Mucosa of descending colon (tissue), 3 donors: ENCODE measurements at regions of chr9 and their contacts with region 1.

Region 1: GRCh38 chr9:107172160-107172978 is 110.7 kb upstream of the RAD23B start:
- DNase-seq: peak in 2 of 3 donors; percentile 77 to 84
- ATAC-seq: peak; percentile 83
- H3K4me3 ChIP-seq: no peak overlapping the region
- H3K4me1 ChIP-seq: peaks cover 5% of the 10 kb centered on the region
- CTCF ChIP-seq: peak; percentile 64

Region 2: DNA sequence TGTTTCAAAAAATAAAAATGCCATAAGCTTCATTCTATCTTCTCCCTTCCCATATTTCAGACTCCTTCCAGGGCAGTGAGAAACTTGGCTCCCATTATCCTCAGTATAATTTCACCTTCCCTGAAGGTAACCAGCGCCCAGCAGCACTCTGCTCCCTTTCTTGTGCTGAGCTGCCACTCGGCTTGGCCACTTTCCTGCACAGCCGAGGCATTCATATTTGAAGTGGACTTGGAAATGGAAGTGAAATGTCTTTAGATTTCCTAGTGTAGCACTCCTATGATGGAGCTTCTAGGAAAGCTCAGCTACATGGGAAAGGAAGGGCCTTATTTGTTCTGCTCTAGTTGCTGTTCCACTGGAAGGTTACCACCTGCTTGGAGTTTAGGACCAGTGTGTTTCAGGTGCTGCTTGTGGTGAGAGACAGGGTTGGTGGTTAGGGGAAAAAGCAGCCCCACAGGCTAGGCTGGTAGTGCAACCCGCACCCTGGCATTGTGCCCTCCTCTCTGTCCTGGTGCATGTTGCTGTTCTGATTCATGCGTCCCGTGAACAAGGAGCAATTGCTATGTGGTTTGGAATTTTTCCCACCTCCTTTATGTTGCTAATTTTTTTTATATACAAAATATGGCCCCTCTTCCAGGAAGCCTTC is 164.5 kb after region 1 on chr9:
- intact Hi-C with region 1: loop called in 1 of 2 experiments (anchors 10 kb)
- DNase-seq: no peak
- ATAC-seq: no peak
- H3K4me3 ChIP-seq: no peak overlapping the region
- H3K4me1 ChIP-seq: no peaks in the 10 kb centered on the region
- CTCF ChIP-seq: no peak

Region 3: DNA sequence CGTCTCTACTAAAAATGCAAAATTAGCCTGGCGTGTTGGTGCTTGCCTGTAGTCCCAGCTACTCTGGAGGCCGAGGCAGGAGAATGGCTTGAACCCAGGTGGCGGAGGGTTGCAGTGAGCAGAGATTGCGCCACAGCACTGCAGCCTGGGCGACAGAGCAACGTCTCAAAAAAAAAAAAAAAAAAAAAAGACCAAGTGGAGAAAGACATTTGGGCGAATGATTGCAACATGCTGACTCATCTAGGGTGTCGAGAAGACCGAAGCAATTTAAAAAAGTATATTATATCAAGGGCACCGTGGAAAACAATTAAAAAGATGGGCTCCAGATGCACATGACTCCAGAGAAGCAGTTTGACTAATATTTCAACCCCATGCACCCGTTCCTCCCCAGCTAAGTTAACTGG is 308.0 kb after region 1 on chr9:
- intact Hi-C with region 1: no loop called
- DNase-seq: peak in 2 of 3 donors; percentile 31 to 65
- ATAC-seq: peak; percentile 66
- H3K4me3 ChIP-seq: no peak overlapping the region
- H3K4me1 ChIP-seq: no peaks in the 10 kb centered on the region
- CTCF ChIP-seq: no peak